T-cell (primary cell): ENCODE measurements at regions of chr2 and their contacts with region 1.

Region 1: DNA sequence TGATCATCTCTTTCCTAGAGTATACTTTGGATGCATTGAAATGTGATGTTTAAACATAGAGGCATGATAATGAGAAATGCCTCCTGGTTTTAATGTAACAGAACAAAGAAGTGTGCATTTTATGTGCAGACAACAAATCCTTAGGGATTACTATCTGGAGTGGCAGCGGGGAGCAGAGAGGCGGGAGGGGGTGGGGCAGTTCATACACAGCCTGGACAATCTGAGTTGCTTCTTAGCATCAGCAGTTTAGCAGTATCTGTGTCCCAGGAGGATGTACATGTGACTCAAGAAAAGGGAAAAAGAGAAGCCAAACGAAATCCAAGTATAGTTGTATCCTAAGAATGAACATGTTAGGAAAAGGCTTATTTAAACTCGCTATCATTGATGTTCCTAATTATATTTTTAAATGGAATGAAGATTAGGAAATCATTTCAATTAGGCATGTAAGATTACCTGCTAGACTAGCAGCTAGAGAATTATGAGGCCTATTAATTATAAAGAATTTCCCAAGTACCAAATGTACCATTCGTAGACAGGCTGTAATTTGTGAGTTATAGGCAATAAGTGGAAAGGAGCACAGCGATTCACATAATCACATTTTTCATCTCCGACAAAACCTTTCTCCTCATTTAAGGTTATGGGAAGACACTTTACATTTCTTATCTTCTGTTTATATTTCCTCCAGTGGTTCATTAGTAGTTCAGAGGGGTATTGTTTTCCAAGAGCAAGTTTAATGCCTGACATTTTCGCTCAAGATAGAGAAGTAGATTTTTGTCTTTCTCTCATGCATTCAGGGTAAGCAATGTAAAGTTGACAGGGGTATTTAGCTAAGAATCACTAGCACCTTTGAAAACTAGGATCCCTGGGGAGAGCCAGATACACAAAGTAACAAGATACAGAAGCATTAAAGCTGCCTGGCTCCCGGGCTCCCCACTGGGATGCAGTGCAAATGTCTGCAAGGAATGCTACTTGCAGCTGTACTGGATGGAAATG is 141.3 kb upstream of the NOSTRIN start:
- DNase-seq: no peak
- ATAC-seq: no peak
- H3K4me3 ChIP-seq: no peak overlapping the region
- H3K4me3 Mint-ChIP-seq: no peak overlapping the region
- H3K27ac ChIP-seq: no peak overlapping the region
- H3K27ac Mint-ChIP-seq: no peak overlapping the region
- H3K4me1 ChIP-seq: no peaks in the 10 kb centered on the region
- H3K4me1 Mint-ChIP-seq: peaks cover 17 to 29% (median 20%) of the 10 kb centered on the region in 3 donors
- H3K27me3 ChIP-seq: no peaks in the 10 kb centered on the region
- H3K27me3 Mint-ChIP-seq: no peaks in the 10 kb centered on the region

Region 2: GRCh38 chr2:168545439-168546082 is 115.6 kb before region 1 on chr2:
- CTCF ChIA-PET with region 1: no interaction called
- POLR2A ChIA-PET with region 1: no interaction called
- DNase-seq: no peak
- ATAC-seq: no peak
- H3K4me3 ChIP-seq: no peak overlapping the region
- H3K4me3 Mint-ChIP-seq: no peak overlapping the region
- H3K27ac ChIP-seq: no peak overlapping the region
- H3K27ac Mint-ChIP-seq: no peak overlapping the region
- H3K4me1 ChIP-seq: peaks cover 9 to 17% of the 10 kb centered on the region in 2 experiments
- H3K4me1 Mint-ChIP-seq: peaks cover 47 to 70% (median 57%) of the 10 kb centered on the region in 3 donors
- H3K27me3 ChIP-seq: no peaks in the 10 kb centered on the region
- H3K27me3 Mint-ChIP-seq: no peaks in the 10 kb centered on the region

Region 3: DNA sequence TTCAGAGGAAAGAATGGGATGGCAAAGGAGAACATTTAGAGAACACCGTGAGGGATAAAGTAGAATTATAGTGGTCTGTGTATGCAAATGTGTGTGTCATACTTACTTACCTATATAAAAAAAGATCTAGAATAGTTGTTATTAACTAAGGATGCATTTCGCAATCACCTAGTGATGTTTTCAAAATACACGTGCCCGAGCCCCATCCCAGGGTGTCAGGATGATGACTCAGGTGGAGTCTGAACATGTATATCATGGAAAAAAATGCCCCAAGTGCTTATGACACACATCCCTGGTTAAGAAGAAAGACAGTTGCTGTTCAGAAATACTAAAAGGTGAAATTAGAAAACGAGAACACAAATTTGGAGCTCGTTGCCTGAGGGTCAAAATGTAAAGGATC is 96.1 kb before region 1 on chr2:
- CTCF ChIA-PET with region 1: no interaction called
- POLR2A ChIA-PET with region 1: no interaction called
- DNase-seq: no peak
- ATAC-seq: no peak
- H3K4me3 ChIP-seq: no peak overlapping the region
- H3K4me3 Mint-ChIP-seq: no peak overlapping the region
- H3K27ac ChIP-seq: no peak overlapping the region
- H3K27ac Mint-ChIP-seq: no peak overlapping the region
- H3K4me1 ChIP-seq: no peaks in the 10 kb centered on the region
- H3K4me1 Mint-ChIP-seq: peaks cover 35 to 38% (median 36%) of the 10 kb centered on the region in 3 donors
- H3K27me3 ChIP-seq: no peaks in the 10 kb centered on the region
- H3K27me3 Mint-ChIP-seq: no peaks in the 10 kb centered on the region

Region 4: DNA sequence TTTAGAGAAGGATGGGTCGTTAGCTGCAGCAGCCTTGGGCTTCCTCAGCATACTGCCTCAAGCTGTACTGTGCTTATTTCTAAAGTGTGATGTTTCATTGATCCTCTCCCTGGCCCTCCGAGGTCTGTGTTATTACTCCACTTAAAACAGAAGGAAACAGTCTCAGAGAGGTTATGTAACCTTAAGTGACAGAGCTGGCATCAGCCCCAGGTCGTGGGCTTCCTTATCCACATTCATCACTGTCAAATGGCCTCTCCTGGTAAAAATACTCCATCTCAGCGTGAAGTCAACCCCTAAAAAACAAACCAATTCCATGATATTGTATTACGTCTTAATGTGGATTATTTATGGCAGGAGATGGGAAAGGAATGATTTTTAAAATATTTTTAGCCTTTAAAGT is 12.1 kb before region 1 on chr2:
- CTCF ChIA-PET with region 1: interaction called in 1 of 2 experiments, 12 read pairs
- POLR2A ChIA-PET with region 1: no interaction called
- DNase-seq: no peak
- ATAC-seq: no peak
- H3K4me3 ChIP-seq: no peak overlapping the region
- H3K4me3 Mint-ChIP-seq: no peak overlapping the region
- H3K27ac ChIP-seq: no peak overlapping the region
- H3K27ac Mint-ChIP-seq: peak overlapping the region in 1 of 2 donors; percentile 18
- H3K4me1 ChIP-seq: peaks cover 4 to 14% of the 10 kb centered on the region in 2 experiments
- H3K4me1 Mint-ChIP-seq: peaks cover 9 to 32% (median 13%) of the 10 kb centered on the region in 3 donors
- H3K27me3 ChIP-seq: no peaks in the 10 kb centered on the region
- H3K27me3 Mint-ChIP-seq: no peaks in the 10 kb centered on the region

Region 5: GRCh38 chr2:169038338-169038757 is 377.2 kb after region 1 on chr2:
- CTCF ChIA-PET with region 1: no interaction called
- POLR2A ChIA-PET with region 1: no interaction called
- DNase-seq: no peak
- ATAC-seq: no peak
- H3K4me3 ChIP-seq: no peak overlapping the region
- H3K4me3 Mint-ChIP-seq: no peak overlapping the region
- H3K27ac ChIP-seq: no peak overlapping the region
- H3K27ac Mint-ChIP-seq: no peak overlapping the region
- H3K4me1 ChIP-seq: no peaks in the 10 kb centered on the region
- H3K4me1 Mint-ChIP-seq: peaks cover 7 to 16% (median 16%) of the 10 kb centered on the region in 3 donors
- H3K27me3 ChIP-seq: no peaks in the 10 kb centered on the region
- H3K27me3 Mint-ChIP-seq: no peaks in the 10 kb centered on the region

Region 6: GRCh38 chr2:169664978-169665930 is 1004.1 kb after region 1 on chr2:
- CTCF ChIA-PET with region 1: no interaction called
- POLR2A ChIA-PET with region 1: no interaction called
- DNase-seq: no peak
- ATAC-seq: no peak
- H3K4me3 ChIP-seq: no peak overlapping the region
- H3K4me3 Mint-ChIP-seq: no peak overlapping the region
- H3K27ac ChIP-seq: no peak overlapping the region
- H3K27ac Mint-ChIP-seq: no peak overlapping the region
- H3K4me1 ChIP-seq: no peaks in the 10 kb centered on the region
- H3K4me1 Mint-ChIP-seq: no peaks in the 10 kb centered on the region
- H3K27me3 ChIP-seq: no peaks in the 10 kb centered on the region
- H3K27me3 Mint-ChIP-seq: peaks cover 0 to 2% of the 10 kb centered on the region in 2 donors